Transverse colon (tissue), 4 donors: ENCODE measurements at regions of chr17 and their contacts with region 1.

Region 1: GRCh38 chr17:4467287-4467686 is 31.4 kb upstream of the SPNS2 start:
- DNase-seq: no peak
- H3K4me3 ChIP-seq: no peak overlapping the region
- H3K27ac ChIP-seq: no peak overlapping the region
- H3K4me1 ChIP-seq: no peaks in the 10 kb centered on the region
- H3K27me3 ChIP-seq: no peaks in the 10 kb centered on the region
- CTCF ChIP-seq: no peak
- EP300 ChIP-seq: no peak
- POLR2A ChIP-seq: no peak

Region 2: DNA sequence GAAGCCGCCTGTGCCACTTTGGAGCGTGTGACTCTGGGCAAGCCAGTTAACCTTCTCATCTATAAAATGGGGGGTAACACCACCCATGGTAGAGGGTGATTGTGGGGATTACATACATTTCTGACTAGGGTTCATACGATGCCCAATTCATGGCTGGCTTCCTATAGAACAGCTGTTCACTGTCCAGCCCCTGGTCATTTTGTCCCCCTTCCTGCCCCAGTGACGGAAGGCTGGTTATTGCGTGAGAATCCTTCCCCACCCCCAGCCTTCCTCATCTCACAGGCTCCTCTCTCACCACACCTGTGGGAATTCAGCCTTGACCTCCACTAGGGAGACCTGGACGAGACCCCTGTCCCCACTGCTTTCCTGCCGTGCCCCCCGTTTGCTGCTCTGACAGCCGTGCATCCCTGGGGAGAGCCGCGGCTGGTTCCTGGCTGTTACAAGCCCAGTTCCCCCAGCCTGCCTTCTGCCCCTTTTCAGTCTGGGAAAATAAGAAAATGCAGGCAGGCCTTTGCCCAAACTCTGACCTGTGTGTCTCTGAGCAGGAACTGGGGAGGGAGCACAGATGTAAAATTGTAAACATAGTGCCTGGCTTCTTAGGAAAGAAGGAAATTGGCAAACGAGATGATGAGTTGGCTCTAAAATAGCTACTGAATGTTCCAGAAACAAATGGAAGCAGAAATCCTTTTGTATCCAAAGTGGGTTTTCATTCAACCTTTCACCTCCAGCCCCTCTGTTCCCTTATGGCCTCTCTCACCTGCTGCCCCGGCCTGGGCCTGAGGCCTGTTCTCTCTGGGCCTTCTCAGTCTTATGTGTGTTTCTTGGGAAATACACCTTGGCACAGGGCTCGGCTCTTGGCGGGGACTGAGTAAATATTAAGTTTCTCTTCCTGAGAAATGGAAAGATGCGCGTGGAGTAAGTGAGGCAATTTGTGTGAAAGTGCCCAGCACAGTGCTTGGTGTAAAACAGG is 1471.1 kb before region 1 on chr17:
- in situ Hi-C with region 1: no loop called
- intact Hi-C with region 1: loop called (anchors 5 kb)
- DNase-seq: no peak
- H3K4me3 ChIP-seq: no peak overlapping the region
- H3K27ac ChIP-seq: peak overlapping the region in 1 of 4 donors; percentile 21
- H3K4me1 ChIP-seq: peaks cover 0 to 4% (median 0%) of the 10 kb centered on the region in 4 donors
- H3K27me3 ChIP-seq: no peaks in the 10 kb centered on the region
- CTCF ChIP-seq: no peak
- EP300 ChIP-seq: no peak
- POLR2A ChIP-seq: no peak

Region 3: DNA sequence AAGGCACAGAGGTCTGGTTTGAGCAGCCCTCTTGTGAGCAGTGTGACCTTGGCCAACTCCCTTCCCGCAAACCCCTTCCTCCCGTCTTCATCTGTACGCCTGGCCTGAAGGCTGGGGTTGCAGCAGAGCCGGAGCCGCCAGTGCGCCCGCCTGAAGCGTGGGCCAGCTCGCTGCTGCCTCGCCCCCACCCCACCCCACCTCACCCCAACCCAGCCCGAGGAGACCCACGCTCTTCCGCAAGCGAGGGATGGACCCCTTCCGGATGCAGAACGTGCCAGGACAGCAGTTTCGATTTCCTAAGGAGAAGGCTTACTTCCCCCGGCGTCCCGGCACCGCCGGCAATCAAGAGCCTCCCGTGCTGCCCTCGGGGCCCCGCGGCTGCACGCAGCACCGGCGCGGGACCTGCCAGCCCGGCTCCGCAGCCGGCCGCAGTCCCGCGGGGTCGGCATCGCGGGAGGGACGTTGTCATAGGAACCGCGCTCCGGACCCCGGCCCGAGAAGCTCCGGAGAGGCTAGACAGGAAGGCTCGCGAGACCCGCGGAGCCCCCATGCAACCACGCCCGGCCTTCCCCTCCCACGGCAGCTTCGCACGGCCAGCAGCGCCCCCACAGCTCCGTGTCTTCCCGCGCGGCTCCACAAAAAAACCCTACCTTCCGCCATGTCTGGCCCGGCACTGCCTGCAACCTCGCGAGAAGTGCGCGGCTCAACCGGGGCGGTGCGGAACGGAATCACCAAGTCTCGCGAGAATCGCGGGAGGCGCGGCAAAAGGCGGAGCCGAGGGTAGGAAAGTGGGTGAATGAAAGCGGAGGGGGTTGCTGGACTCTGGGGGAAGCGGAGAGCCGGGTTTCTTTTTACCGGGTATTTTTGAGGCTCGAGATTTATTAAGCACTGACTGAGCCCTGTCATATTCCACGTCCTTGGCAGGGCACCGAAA is 203.7 kb before region 1 on chr17 and contains the start of gene ANKFY1:
- in situ Hi-C with region 1: no loop called
- intact Hi-C with region 1: no loop called
- DNase-seq: peak; percentile 97
- H3K4me3 ChIP-seq: peak within 1 kb of the TSS; percentile 89 to 100 (median 94)
- H3K27ac ChIP-seq: peak within 1 kb of the TSS; percentile 89 to 93 (median 92)
- H3K4me1 ChIP-seq: peaks cover 17 to 32% (median 23%) of the 10 kb centered on the region in 4 donors
- H3K27me3 ChIP-seq: no peaks in the 10 kb centered on the region
- CTCF ChIP-seq: peak in 1 of 5 experiments; percentile 7
- EP300 ChIP-seq: no peak
- POLR2A ChIP-seq: peak; percentile 71
- total RNA-seq, gene ANKFY1: 53.0 to 69.9 (median 54.7) TPM

Region 4: DNA sequence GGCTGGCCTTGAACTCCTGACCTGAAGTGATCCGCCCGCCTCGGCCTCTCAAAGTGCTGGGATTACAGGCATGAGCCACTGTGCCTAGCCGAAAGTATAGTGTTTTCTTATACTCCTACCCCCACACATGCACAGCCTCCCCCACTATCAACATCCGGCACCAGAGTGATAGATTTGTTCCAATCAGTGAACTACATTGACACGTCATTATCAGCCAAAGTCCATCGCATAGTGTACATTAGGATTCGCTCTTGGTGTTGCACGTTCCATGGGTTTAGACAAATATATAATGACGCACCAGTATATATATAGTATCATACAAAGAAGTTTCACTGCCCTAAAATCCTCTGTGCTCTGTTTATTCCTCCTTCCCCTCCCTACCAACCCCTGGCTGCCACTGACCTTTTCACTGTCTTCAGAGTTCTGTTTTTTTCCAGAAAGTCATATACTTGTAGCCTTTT is 292.5 kb after region 1 on chr17:
- in situ Hi-C with region 1: no loop called
- intact Hi-C with region 1: no loop called
- DNase-seq: no peak
- H3K4me3 ChIP-seq: no peak overlapping the region
- H3K27ac ChIP-seq: no peak overlapping the region
- H3K4me1 ChIP-seq: no peaks in the 10 kb centered on the region
- H3K27me3 ChIP-seq: peaks cover 5% of the 10 kb centered on the region
- CTCF ChIP-seq: no peak
- EP300 ChIP-seq: no peak
- POLR2A ChIP-seq: no peak